ENCODE measurements at regions of chr3 and their contacts with region 1.

Region 1: DNA sequence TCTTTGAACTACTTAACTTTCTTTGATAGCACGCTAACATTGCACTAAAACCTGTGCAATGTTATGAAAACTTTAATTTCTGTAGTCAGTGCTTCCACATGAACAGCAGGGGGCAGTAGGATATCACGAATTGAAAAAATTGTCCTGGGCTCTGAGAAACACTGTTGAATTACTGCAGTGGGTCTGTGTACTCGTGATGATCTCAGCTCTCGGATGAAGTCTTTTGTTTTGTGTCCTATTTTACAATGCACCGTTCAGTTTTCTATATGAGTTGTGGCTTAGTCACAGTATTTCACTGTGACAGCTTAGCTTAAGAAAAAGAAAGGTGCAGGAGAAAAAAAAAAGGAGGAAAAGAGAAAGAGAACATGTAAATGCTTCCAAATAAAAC is 141.3 kb upstream of the CCDC54 start:
- DNase-seq: peak; percentile 6 to 82 (median 41)
- ATAC-seq: peak; percentile 69
- H3K4me3 ChIP-seq: peak overlapping the region in 1 of 2 experiments; percentile 20
- H3K4me3 Mint-ChIP-seq: peak overlapping the region; percentile 65
- H3K27ac ChIP-seq: no peak overlapping the region
- H3K27ac Mint-ChIP-seq: no peak overlapping the region
- H3K4me1 ChIP-seq: peaks cover 4% of the 10 kb centered on the region
- H3K4me1 Mint-ChIP-seq: peaks cover 17% of the 10 kb centered on the region
- H3K27me3 ChIP-seq: no peaks in the 10 kb centered on the region
- H3K27me3 Mint-ChIP-seq: peaks cover 6% of the 10 kb centered on the region
- CTCF ChIP-seq: peak; percentile 98

Region 2: GRCh38 chr3:107249132-107249531 is 13.2 kb after region 1 on chr3:
- CTCF ChIA-PET with region 1: interaction called, 22 read pairs
- POLR2A ChIA-PET with region 1: interaction called, 4 read pairs
- intact Hi-C with region 1: no loop called
- DNase-seq: no peak
- ATAC-seq: no peak
- H3K4me3 ChIP-seq: no peak overlapping the region
- H3K4me3 Mint-ChIP-seq: no peak overlapping the region
- H3K27ac ChIP-seq: no peak overlapping the region
- H3K27ac Mint-ChIP-seq: no peak overlapping the region
- H3K4me1 ChIP-seq: no peaks in the 10 kb centered on the region
- H3K4me1 Mint-ChIP-seq: no peaks in the 10 kb centered on the region
- H3K27me3 ChIP-seq: no peaks in the 10 kb centered on the region
- H3K27me3 Mint-ChIP-seq: no peaks in the 10 kb centered on the region
- CTCF ChIP-seq: no peak

Region 3: DNA sequence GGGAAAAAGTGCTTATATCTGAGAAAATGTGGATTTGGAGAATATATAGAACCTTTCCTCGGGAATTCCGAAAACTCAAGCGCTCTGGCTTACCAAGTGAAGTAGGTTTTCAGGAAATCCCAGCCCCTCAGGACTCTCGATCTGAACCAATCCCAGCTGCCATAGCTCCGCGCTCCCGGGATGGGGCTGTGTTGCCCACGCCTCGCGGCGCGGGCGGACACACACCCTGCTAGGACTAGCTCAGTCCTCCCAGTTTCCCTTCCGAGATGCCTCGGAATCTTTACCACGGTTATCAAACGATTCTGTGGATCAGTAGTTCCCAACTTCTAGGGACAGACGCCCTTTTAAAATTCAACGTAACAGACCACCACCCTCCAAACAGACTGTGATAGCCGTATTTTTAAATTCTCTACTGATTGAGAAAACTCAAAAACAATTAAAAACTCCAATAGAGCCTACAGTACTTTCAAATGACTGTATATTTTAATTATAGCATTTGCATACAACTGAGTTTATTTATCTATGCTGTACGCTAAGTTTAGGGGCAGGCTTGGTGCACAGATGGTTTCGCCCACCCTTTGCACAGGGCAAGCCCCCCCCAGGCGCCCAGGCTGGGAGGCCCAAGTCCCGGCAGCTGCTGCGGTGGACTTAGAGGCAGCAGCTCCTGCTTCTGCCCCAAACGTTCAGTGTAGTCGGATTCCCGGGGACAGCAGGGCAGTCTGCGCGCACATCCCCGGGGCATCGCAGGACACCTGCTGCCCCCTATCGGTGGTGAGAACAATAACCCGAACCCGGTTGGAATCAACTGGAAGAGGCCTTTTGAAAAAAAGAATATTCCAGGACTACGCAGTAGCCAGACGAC is 193.6 kb after region 1 on chr3:
- CTCF ChIA-PET with region 1: interaction called, 24 read pairs
- POLR2A ChIA-PET with region 1: no interaction called
- intact Hi-C with region 1: no loop called
- DNase-seq: peak; percentile 19 to 78 (median 47)
- ATAC-seq: peak; percentile 66
- H3K4me3 ChIP-seq: peak overlapping the region; percentile 57 to 69
- H3K4me3 Mint-ChIP-seq: peak overlapping the region; percentile 89
- H3K27ac ChIP-seq: no peak overlapping the region
- H3K27ac Mint-ChIP-seq: peak overlapping the region; percentile 14
- H3K4me1 ChIP-seq: peaks cover 11% of the 10 kb centered on the region
- H3K4me1 Mint-ChIP-seq: peaks cover 19% of the 10 kb centered on the region
- H3K27me3 ChIP-seq: peaks cover 0 to 3% of the 10 kb centered on the region in 2 experiments
- H3K27me3 Mint-ChIP-seq: peaks cover 13% of the 10 kb centered on the region
- CTCF ChIP-seq: peak; percentile 77

Region 4: DNA sequence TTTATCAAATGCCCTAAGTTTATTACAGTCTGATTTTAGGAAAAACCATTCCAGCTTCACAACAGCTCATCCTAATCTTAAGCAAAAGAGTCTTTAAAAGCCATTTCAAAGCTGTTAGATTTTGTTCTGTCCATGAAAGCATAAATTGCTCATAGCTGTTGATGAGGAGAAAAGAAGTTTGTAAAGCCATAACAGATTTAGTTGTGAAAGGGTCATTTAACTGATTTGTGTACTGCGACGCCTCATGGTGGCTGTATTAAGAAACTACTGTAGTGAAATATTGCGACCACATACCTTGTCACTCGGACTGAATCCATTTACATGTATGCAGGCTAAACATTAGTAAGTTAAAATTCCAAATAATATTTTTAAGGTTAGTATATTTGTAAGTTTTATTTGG is 307.7 kb after region 1 on chr3:
- CTCF ChIA-PET with region 1: interaction called, 3 read pairs
- POLR2A ChIA-PET with region 1: interaction called, 3 read pairs
- intact Hi-C with region 1: loop called in 1 of 2 experiments (anchors 5 kb)
- DNase-seq: peak in 2 of 9 experiments; percentile 30 to 49
- ATAC-seq: no peak
- H3K4me3 ChIP-seq: no peak overlapping the region
- H3K4me3 Mint-ChIP-seq: no peak overlapping the region
- H3K27ac ChIP-seq: no peak overlapping the region
- H3K27ac Mint-ChIP-seq: no peak overlapping the region
- H3K4me1 ChIP-seq: peaks cover 7% of the 10 kb centered on the region
- H3K4me1 Mint-ChIP-seq: peaks cover 40% of the 10 kb centered on the region
- H3K27me3 ChIP-seq: no peaks in the 10 kb centered on the region
- H3K27me3 Mint-ChIP-seq: no peaks in the 10 kb centered on the region
- CTCF ChIP-seq: no peak

Region 5: GRCh38 chr3:107740992-107741896 is 505.3 kb after region 1 on chr3:
- CTCF ChIA-PET with region 1: interaction called, 11 read pairs
- POLR2A ChIA-PET with region 1: no interaction called
- intact Hi-C with region 1: loop called (anchors 1 to 2 kb)
- DNase-seq: peak in 2 of 9 experiments; percentile 24 to 45
- ATAC-seq: no peak
- H3K4me3 ChIP-seq: no peak overlapping the region
- H3K4me3 Mint-ChIP-seq: no peak overlapping the region
- H3K27ac ChIP-seq: no peak overlapping the region
- H3K27ac Mint-ChIP-seq: peak overlapping the region; percentile 20
- H3K4me1 ChIP-seq: no peaks in the 10 kb centered on the region
- H3K4me1 Mint-ChIP-seq: no peaks in the 10 kb centered on the region
- H3K27me3 ChIP-seq: no peaks in the 10 kb centered on the region
- H3K27me3 Mint-ChIP-seq: no peaks in the 10 kb centered on the region
- CTCF ChIP-seq: peak; percentile 74

Region 6: GRCh38 chr3:108477511-108478147 is 1241.7 kb after region 1 on chr3:
- CTCF ChIA-PET with region 1: interaction called, 9 read pairs
- POLR2A ChIA-PET with region 1: no interaction called
- intact Hi-C with region 1: loop called (anchors 1 to 2 kb)
- DNase-seq: peak; percentile 10 to 72 (median 49)
- ATAC-seq: peak; percentile 90
- H3K4me3 ChIP-seq: no peak overlapping the region
- H3K4me3 Mint-ChIP-seq: no peak overlapping the region
- H3K27ac ChIP-seq: no peak overlapping the region
- H3K27ac Mint-ChIP-seq: no peak overlapping the region
- H3K4me1 ChIP-seq: no peaks in the 10 kb centered on the region
- H3K4me1 Mint-ChIP-seq: peaks cover 3% of the 10 kb centered on the region
- H3K27me3 ChIP-seq: no peaks in the 10 kb centered on the region
- H3K27me3 Mint-ChIP-seq: peaks cover 3% of the 10 kb centered on the region
- CTCF ChIP-seq: peak; percentile 82

Region 7: GRCh38 chr3:108728934-108729333 is 1493.0 kb after region 1 on chr3:
- CTCF ChIA-PET with region 1: no interaction called
- POLR2A ChIA-PET with region 1: no interaction called
- intact Hi-C with region 1: no loop called
- DNase-seq: no peak
- ATAC-seq: no peak
- H3K4me3 ChIP-seq: no peak overlapping the region
- H3K4me3 Mint-ChIP-seq: no peak overlapping the region
- H3K27ac ChIP-seq: no peak overlapping the region
- H3K27ac Mint-ChIP-seq: no peak overlapping the region
- H3K4me1 ChIP-seq: no peaks in the 10 kb centered on the region
- H3K4me1 Mint-ChIP-seq: no peaks in the 10 kb centered on the region
- H3K27me3 ChIP-seq: no peaks in the 10 kb centered on the region
- H3K27me3 Mint-ChIP-seq: no peaks in the 10 kb centered on the region
- CTCF ChIP-seq: no peak